Caco-2 (cell line): ENCODE measurements at regions of chr2 and their contacts with region 1.

Region 1: DNA sequence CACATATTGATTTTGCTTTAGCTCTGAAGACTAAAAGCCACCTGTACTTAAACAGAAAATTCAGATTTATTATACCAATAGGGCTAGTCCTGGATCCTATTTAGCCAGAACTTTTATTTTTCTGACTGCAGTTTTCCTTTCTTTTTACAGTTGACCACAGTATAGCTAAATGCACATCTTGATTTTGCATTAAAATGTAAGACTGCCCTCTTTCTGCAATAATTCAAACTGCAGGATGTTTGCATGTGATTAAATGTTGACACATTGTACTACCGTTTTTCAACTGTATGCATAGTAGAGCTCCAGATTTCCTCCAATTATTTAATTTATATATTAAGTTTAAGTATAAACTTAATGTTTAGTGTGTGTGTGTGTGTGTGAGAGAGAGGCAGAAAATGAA is 1262.9 kb downstream of the SUCLG1 start:
- DNase-seq: peak in 1 of 2 experiments; percentile 32
- H3K4me3 ChIP-seq: no peak overlapping the region
- H3K4me3 Mint-ChIP-seq: no peak overlapping the region
- H3K27ac Mint-ChIP-seq: no peak overlapping the region
- H3K4me1 ChIP-seq: no peaks in the 10 kb centered on the region
- H3K4me1 Mint-ChIP-seq: no peaks in the 10 kb centered on the region
- H3K27me3 ChIP-seq: no peaks in the 10 kb centered on the region
- H3K27me3 Mint-ChIP-seq: no peaks in the 10 kb centered on the region
- CTCF ChIP-seq: peak; percentile 25 to 55

Region 2: GRCh38 chr2:82344670-82345069 is 851.6 kb before region 1 on chr2:
- CTCF ChIA-PET with region 1: no interaction called
- POLR2A ChIA-PET with region 1: no interaction called
- intact Hi-C with region 1: loop called (anchors 1 kb)
- DNase-seq: peak in 1 of 2 experiments; percentile 13
- H3K4me3 ChIP-seq: no peak overlapping the region
- H3K4me3 Mint-ChIP-seq: no peak overlapping the region
- H3K27ac Mint-ChIP-seq: no peak overlapping the region
- H3K4me1 ChIP-seq: no peaks in the 10 kb centered on the region
- H3K4me1 Mint-ChIP-seq: no peaks in the 10 kb centered on the region
- H3K27me3 ChIP-seq: no peaks in the 10 kb centered on the region
- H3K27me3 Mint-ChIP-seq: no peaks in the 10 kb centered on the region
- CTCF ChIP-seq: peak; percentile 25 to 27

Region 3: DNA sequence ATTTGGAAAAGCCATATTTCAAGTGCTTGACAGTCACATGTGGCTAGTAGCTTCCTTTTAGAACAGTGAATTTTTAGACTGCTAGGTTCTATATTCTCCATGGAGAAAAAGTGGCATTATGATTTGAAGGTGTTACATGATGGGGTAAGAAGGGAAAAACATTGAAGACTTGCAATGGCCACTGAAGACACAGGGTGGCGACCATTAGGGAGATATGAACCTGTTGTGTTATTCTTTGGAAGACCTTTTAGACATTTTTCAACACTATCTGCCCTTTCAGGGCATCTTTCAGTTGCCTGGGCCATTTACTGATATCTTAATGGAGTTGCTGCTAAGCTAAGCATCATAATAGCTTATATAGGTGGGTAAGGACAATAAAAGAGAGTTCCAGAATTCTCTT is 124.3 kb before region 1 on chr2:
- CTCF ChIA-PET with region 1: no interaction called
- POLR2A ChIA-PET with region 1: no interaction called
- intact Hi-C with region 1: loop called (anchors 2 kb)
- DNase-seq: peak in 1 of 2 experiments; percentile 10
- H3K4me3 ChIP-seq: no peak overlapping the region
- H3K4me3 Mint-ChIP-seq: no peak overlapping the region
- H3K27ac Mint-ChIP-seq: no peak overlapping the region
- H3K4me1 ChIP-seq: peaks cover 46% of the 10 kb centered on the region
- H3K4me1 Mint-ChIP-seq: peaks cover 16% of the 10 kb centered on the region
- H3K27me3 ChIP-seq: no peaks in the 10 kb centered on the region
- H3K27me3 Mint-ChIP-seq: no peaks in the 10 kb centered on the region
- CTCF ChIP-seq: no peak